A549 (cell line): ENCODE measurements at regions of chr2 and their contacts with region 1.

Region 1: GRCh38 chr2:233053928-233054784 is 6.0 kb upstream of the INPP5D start:
- DNase-seq: peak; percentile 59 to 84
- ATAC-seq: peak; percentile 80 to 95; a peak in 4 of 6 replicates
- H3K4me3 ChIP-seq: no peak overlapping the region
- H3K27ac ChIP-seq: peak overlapping the region; percentile 8 to 65; a peak in 4 of 6 replicates
- H3K4me1 ChIP-seq: 0 out of 3 replicates have a peak, but pooled peaks cover 12% of the 10 kb centered on the region
- CTCF ChIP-seq: peak; percentile 84
- EP300 ChIP-seq: no peak
- POLR2A ChIP-seq: no peak
- RAD21 ChIP-seq: peak; percentile 83 to 86

Region 2: GRCh38 chr2:232854082-232854481 is 200.1 kb before region 1 on chr2:
- CTCF ChIA-PET with region 1: interaction called, 23 read pairs
- POLR2A ChIA-PET with region 1: no interaction called
- DNase-seq: peak in 1 of 2 experiments; percentile 84
- ATAC-seq: peak in 1 of 2 experiments; percentile 10; a peak in 3 of 6 replicates
- H3K4me3 ChIP-seq: no peak overlapping the region
- H3K27ac ChIP-seq: peak overlapping the region; percentile 96 to 98
- H3K4me1 ChIP-seq: peaks cover 74% of the 10 kb centered on the region
- CTCF ChIP-seq: no peak
- EP300 ChIP-seq: peak; percentile 71 to 72; a peak in 2 of 5 replicates
- POLR2A ChIP-seq: no peak
- RAD21 ChIP-seq: peak; percentile 11 to 30; a peak in 3 of 5 replicates

Region 3: DNA sequence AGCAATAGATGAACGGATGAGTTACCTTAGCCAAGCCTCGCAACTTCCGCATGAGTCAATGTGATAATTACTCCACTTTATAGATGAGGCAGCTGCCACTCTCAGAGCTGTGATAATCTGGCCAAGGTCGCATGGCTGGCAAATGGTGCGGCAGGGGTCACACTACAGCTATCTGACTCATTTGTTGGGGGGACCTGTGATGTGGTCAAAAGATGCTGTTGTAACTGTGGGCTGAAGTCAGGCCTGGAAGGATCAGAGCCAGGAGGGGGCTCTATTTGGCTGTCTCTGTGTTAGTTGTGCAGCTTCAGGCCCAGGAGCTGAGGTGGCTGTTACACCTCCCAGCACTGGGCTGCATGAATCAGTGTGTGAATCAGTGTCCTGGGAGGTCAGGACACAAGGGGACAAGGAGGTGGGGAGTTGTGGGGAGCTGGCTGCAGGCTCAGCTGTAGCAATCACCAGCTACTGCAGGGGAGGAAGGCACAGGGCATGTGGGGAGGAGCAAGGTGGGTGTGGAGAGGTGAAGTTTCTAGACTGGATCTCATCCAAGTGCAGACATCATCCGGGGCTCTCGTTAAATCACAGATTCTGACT is 74.2 kb before region 1 on chr2:
- CTCF ChIA-PET with region 1: interaction called, 64 read pairs
- POLR2A ChIA-PET with region 1: no interaction called
- DNase-seq: peak; percentile 79 to 88
- ATAC-seq: peak; percentile 92 to 97
- H3K4me3 ChIP-seq: no peak overlapping the region
- H3K27ac ChIP-seq: peak overlapping the region; percentile 74 to 86
- H3K4me1 ChIP-seq: peaks cover 36% of the 10 kb centered on the region
- CTCF ChIP-seq: peak; percentile 62
- EP300 ChIP-seq: peak in 1 of 2 experiments; percentile 39; a peak in 1 of 5 replicates
- POLR2A ChIP-seq: no peak
- RAD21 ChIP-seq: peak; percentile 87 to 88

Region 4: GRCh38 chr2:233026192-233026813 is 27.9 kb before region 1 on chr2:
- CTCF ChIA-PET with region 1: interaction called, 52 read pairs
- POLR2A ChIA-PET with region 1: no interaction called
- DNase-seq: peak in 1 of 2 experiments; percentile 19
- ATAC-seq: no peak
- H3K4me3 ChIP-seq: no peak overlapping the region
- H3K27ac ChIP-seq: peak overlapping the region; percentile 57 to 61
- H3K4me1 ChIP-seq: peaks cover 23% of the 10 kb centered on the region
- CTCF ChIP-seq: no peak
- EP300 ChIP-seq: no peak
- POLR2A ChIP-seq: no peak
- RAD21 ChIP-seq: no peak

Region 5: DNA sequence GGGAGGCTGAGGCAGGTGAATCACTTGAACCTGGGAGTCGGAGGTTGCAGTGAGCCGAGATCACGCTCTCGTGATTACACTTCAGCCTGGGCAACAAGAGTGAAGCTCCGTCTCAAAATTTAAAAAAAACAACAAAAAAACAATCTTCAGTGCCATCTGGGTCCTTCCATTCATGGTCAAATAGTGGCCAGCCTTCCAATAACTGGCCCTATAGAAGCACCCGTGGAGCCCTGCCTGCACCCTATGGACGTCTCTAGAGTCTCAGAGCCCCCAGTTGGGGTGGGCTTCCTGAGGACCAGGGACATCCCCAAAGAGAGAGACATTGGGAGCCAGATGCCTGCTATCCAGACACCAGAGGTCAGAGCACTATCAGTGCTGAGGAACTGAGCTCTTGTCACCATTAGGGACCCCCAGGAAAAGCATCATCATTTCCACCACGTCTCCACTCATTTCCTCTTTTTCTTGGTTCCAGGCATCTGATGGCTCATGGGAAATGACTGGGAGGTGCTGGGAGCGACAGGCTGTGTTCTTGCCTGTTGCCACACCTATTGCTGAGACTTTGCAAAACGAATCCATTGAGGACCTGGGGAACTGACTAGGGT is 12.3 kb before region 1 on chr2:
- CTCF ChIA-PET with region 1: interaction called, 39 read pairs
- POLR2A ChIA-PET with region 1: no interaction called
- DNase-seq: no peak
- ATAC-seq: no peak
- H3K4me3 ChIP-seq: no peak overlapping the region
- H3K27ac ChIP-seq: no peak overlapping the region
- H3K4me1 ChIP-seq: no peaks in the 10 kb centered on the region
- CTCF ChIP-seq: no peak
- EP300 ChIP-seq: no peak
- POLR2A ChIP-seq: no peak
- RAD21 ChIP-seq: no peak

Region 6: GRCh38 chr2:233087713-233088112 is 33.6 kb after region 1 on chr2:
- CTCF ChIA-PET with region 1: interaction called, 12 read pairs
- POLR2A ChIA-PET with region 1: no interaction called
- DNase-seq: no peak
- ATAC-seq: no peak
- H3K4me3 ChIP-seq: no peak overlapping the region
- H3K27ac ChIP-seq: no peak overlapping the region
- H3K4me1 ChIP-seq: no peaks in the 10 kb centered on the region
- CTCF ChIP-seq: no peak
- EP300 ChIP-seq: no peak
- POLR2A ChIP-seq: no peak
- RAD21 ChIP-seq: no peak